MCF 10A (cell line): ENCODE measurements at regions of chr10 and their contacts with region 1.

Region 1: GRCh38 chr10:51047857-51048256 is 26.4 kb upstream of the PRKG1 start:
- DNase-seq: no peak
- H3K4me3 Mint-ChIP-seq: no peak overlapping the region
- H3K27ac Mint-ChIP-seq: no peak overlapping the region
- H3K4me1 Mint-ChIP-seq: no peaks in the 10 kb centered on the region
- H3K27me3 Mint-ChIP-seq: peaks cover 19% of the 10 kb centered on the region
- CTCF ChIP-seq: no peak

Region 2: DNA sequence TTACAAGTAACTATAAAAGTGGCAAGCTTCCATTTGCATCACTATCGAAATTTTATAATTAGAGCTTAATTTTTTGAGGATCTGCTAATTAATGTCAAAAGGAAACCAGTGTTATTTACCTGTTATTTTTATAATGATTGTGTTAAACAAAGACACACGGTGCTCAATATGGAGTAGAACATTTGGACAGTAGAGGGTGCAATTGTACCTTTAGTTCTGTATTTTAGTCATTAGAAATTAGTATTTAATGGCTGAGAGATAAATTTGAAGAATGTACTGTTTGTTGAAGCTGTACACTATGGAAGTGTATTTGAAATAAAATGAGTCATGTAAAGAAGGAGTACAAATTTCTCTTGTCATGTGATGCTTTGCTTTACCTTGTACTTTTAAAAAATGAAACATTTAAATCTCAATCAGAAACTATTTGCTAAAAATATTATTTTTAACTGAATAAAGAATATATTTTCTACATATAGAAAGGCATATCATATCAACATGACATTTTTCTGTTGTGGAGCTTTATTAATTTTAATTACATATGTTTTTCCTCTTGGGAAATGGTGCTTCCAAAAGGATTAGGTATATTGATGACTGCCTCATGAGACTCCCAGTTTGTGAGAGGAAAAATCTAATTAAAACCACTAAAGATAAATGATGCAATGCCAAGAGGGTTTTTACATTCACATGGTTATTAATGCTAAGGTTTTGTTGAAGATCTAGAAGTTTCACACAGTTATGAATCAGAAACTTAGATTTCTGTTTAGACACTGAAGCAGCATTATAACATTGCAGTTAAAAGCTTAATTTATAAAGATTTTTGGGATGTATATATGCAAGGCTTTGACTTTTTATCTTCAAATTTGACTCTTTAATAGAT is 16.0 kb after region 1 on chr10:
- CTCF ChIA-PET with region 1: interaction called, 19 read pairs
- POLR2A ChIA-PET with region 1: no interaction called
- intact Hi-C with region 1: no loop called
- DNase-seq: peak; percentile 30
- H3K4me3 Mint-ChIP-seq: no peak overlapping the region
- H3K27ac Mint-ChIP-seq: no peak overlapping the region
- H3K4me1 Mint-ChIP-seq: no peaks in the 10 kb centered on the region
- H3K27me3 Mint-ChIP-seq: peaks cover 60% of the 10 kb centered on the region
- CTCF ChIP-seq: peak; percentile 54